ENCODE measurements at regions of chr9 and their contacts with region 1.

Region 1: GRCh38 chr9:85425153-85425611 is 316.6 kb downstream of the AGTPBP1 start:
- DNase-seq: peak; percentile 77
- H3K4me3 ChIP-seq: no peak overlapping the region; a peak in 1 of 4 replicates
- H3K27ac ChIP-seq: no peak overlapping the region
- H3K4me1 ChIP-seq: peaks cover 0 to 11% of the 10 kb centered on the region in 2 experiments; a peak in 2 of 4 replicates
- H3K27me3 ChIP-seq: no peaks in the 10 kb centered on the region
- CTCF ChIP-seq: peak; percentile 73
- EP300 ChIP-seq: no peak
- RAD21 ChIP-seq: peak; percentile 82

Region 2: GRCh38 chr9:84697509-84698114 is 727.6 kb before region 1 on chr9:
- CTCF ChIA-PET with region 1: interaction called, 13 read pairs
- POLR2A ChIA-PET with region 1: no interaction called
- DNase-seq: peak; percentile 58
- H3K4me3 ChIP-seq: no peak overlapping the region
- H3K27ac ChIP-seq: no peak overlapping the region
- H3K4me1 ChIP-seq: no peaks in the 10 kb centered on the region
- H3K27me3 ChIP-seq: no peaks in the 10 kb centered on the region; the same call in 1 of the 2 replicates
- CTCF ChIP-seq: peak; percentile 68
- EP300 ChIP-seq: no peak
- RAD21 ChIP-seq: peak; percentile 74

Region 3: DNA sequence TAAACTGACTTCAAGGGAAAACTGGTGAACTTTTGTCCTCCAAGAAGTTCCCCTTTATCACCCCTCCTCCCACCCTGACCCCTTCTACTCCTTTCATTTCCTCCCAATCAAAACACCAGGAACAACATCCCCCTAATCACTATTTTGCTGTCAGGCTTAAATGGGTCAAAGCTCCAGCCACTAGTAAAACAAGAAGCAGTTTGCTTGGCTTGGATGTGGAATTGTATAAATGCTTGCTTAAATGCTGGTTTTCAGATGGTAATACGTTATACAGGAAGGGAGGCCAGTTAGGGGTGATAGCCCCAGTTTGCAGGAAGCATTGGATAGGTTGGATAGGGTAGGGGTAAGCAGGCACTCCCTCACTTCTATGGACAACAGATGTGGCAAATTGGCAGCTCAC is 157.1 kb before region 1 on chr9:
- CTCF ChIA-PET with region 1: interaction called, 15 read pairs
- POLR2A ChIA-PET with region 1: no interaction called
- DNase-seq: no peak
- H3K4me3 ChIP-seq: no peak overlapping the region
- H3K27ac ChIP-seq: no peak overlapping the region
- H3K4me1 ChIP-seq: peaks cover 0 to under 1% of the 10 kb centered on the region in 2 experiments; a peak in 1 of 4 replicates
- H3K27me3 ChIP-seq: no peaks in the 10 kb centered on the region
- CTCF ChIP-seq: no peak
- EP300 ChIP-seq: no peak
- RAD21 ChIP-seq: no peak

Region 4: GRCh38 chr9:85404911-85405565 is 20.1 kb before region 1 on chr9:
- CTCF ChIA-PET with region 1: interaction called, 11 read pairs
- POLR2A ChIA-PET with region 1: no interaction called
- DNase-seq: no peak
- H3K4me3 ChIP-seq: no peak overlapping the region
- H3K27ac ChIP-seq: no peak overlapping the region
- H3K4me1 ChIP-seq: peaks cover 5 to 17% of the 10 kb centered on the region in 2 experiments; a peak in 3 of 4 replicates
- H3K27me3 ChIP-seq: no peaks in the 10 kb centered on the region
- CTCF ChIP-seq: no peak
- EP300 ChIP-seq: no peak
- RAD21 ChIP-seq: no peak

Region 5: DNA sequence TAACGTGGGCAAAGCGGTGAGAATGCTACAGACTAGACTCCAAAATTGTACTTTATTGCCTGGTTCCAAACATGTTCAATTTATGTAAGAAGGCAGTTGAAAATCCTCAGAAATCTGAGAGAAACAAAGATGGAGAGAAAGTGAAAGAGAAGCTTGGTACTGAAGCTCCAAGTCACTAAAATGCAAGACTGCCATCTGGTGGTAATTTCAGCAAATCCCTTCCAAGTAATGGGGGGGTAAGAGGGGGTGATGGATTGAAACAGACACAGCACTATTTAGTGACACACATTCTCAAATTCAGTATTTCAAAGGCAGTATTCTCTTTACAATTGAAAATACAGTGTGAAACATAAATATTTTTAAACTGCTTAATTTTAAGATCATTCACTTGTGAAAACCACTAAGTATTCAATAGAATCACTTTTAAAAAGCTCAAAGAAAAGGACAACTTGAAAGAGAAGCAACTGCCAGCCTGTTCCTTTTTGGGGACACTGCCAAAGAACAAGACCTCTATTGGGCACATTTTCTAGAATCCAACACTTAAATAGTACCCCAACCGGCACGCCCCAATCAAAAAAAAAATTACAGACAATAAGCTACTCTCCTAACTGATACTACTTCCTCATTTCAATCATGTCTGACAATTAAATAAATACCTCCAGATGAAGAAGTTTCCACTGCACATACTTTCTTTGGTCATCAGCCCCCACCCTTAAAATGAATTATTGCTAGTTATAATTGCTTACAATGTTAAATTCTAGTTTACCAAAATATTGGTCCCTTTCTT is 185.1 kb after region 1 on chr9:
- CTCF ChIA-PET with region 1: interaction called, 23 read pairs
- POLR2A ChIA-PET with region 1: no interaction called
- DNase-seq: peak; percentile 74
- H3K4me3 ChIP-seq: peak overlapping the region in 1 of 2 experiments; percentile 18; a peak in 1 of 4 replicates
- H3K27ac ChIP-seq: peak overlapping the region; percentile 12 to 40; a peak in 1 of 4 replicates
- H3K4me1 ChIP-seq: no peaks in the 10 kb centered on the region; a peak in 1 of 4 replicates
- H3K27me3 ChIP-seq: no peaks in the 10 kb centered on the region
- CTCF ChIP-seq: peak; percentile 91
- EP300 ChIP-seq: no peak
- RAD21 ChIP-seq: peak; percentile 92

Measured in SK-N-SH (cell line).